Activated CD4-positive, alpha-beta memory T cell treated with anti-CD3 and anti-CD28 coated beads for 36 hours (primary cell): ENCODE measurements at regions of chr12 and their contacts with region 1.

Region 1: GRCh38 chr12:124493809-124494750 is 73.3 kb downstream of the NCOR2 start:
- DNase-seq: peak; percentile 86
- H3K4me3 Mint-ChIP-seq: no peak overlapping the region
- H3K27ac Mint-ChIP-seq: peak overlapping the region; percentile 81
- H3K4me1 Mint-ChIP-seq: peaks cover 49% of the 10 kb centered on the region
- H3K27me3 Mint-ChIP-seq: no peaks in the 10 kb centered on the region

Region 2: DNA sequence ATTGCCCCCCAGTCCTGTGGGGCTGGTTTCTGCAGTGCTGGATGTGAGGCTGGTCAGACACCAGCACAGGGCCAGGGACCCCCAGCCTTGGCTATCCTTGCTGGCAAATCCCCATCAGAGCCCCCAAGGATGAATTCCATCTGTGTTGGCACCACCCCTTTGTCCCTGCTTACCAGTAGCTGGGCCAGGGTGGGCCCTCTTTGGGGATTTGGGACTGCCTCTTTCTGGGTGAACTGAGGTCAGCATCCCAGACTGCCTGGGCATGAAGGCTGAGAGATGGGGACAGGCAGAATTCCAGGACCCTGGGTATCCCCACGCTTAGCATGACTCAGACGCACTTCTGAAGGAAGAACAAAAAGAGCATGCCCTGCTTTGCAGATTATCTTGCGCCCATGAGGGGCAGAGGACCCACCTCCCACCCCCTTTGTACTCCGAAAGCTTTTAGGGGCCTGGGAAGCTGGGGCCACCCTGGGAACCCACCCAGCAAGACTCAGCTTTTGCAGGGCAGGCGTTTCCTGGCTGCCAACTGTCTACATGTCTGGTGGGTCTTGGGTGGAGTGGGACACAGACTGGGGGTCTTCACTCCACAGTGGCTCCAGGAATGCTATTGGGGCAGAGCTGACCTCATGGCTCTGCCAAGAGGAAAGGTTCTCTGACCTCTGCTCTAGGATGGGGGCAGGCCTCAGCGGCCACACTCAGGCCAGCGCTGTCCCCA is 172.4 kb before region 1 on chr12:
- CTCF ChIA-PET with region 1: no interaction called
- POLR2A ChIA-PET with region 1: no interaction called
- intact Hi-C with region 1: no loop called
- DNase-seq: no peak
- H3K4me3 Mint-ChIP-seq: no peak overlapping the region
- H3K27ac Mint-ChIP-seq: no peak overlapping the region
- H3K4me1 Mint-ChIP-seq: no peaks in the 10 kb centered on the region
- H3K27me3 Mint-ChIP-seq: no peaks in the 10 kb centered on the region

Region 3: GRCh38 chr12:124379938-124380754 is 113.9 kb before region 1 on chr12:
- CTCF ChIA-PET with region 1: no interaction called
- POLR2A ChIA-PET with region 1: no interaction called
- intact Hi-C with region 1: no loop called
- DNase-seq: no peak
- H3K4me3 Mint-ChIP-seq: no peak overlapping the region
- H3K27ac Mint-ChIP-seq: no peak overlapping the region
- H3K4me1 Mint-ChIP-seq: no peaks in the 10 kb centered on the region
- H3K27me3 Mint-ChIP-seq: no peaks in the 10 kb centered on the region

Region 4: GRCh38 chr12:124480469-124481256 is 13.4 kb before region 1 on chr12:
- CTCF ChIA-PET with region 1: no interaction called
- POLR2A ChIA-PET with region 1: interaction called, 3 read pairs
- intact Hi-C with region 1: loop called (anchors 1 kb)
- DNase-seq: peak; percentile 77
- H3K4me3 Mint-ChIP-seq: no peak overlapping the region
- H3K27ac Mint-ChIP-seq: peak overlapping the region; percentile 28
- H3K4me1 Mint-ChIP-seq: peaks cover 40% of the 10 kb centered on the region
- H3K27me3 Mint-ChIP-seq: no peaks in the 10 kb centered on the region